B cell (primary cell): ENCODE measurements at regions of chr4 and their contacts with region 1.

Region 1: DNA sequence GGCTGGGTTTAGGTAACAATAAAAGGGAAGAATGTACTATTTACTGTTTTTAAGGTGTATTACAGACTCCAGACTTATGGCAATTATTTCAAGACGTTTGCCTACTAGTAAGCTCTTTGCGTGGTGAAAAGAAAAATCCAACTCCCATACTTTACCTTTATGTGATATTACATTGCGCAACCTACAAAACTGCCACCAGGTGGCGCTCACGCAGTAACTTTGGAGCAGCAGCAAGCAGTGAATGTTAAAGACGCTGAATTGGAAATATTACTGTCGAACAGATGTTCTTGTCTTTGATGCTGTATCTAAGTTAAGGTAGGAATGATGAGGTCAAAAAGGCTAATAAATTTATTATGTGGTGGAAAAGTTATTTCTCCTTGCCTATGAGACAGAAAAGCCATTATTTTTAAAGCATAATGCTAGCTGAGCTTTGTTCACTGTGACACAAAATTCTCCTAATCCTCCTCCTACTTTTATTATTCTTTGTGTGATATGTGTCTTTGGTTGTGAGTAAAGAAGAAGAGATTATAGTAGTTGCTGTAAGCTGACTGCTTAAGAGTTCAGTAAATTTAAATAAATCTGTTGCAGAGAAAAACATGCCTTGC is 1099.8 kb upstream of the TENM3 start:
- DNase-seq: peak; percentile 65
- ATAC-seq: peak; percentile 36
- H3K4me3 ChIP-seq: no peak overlapping the region
- H3K4me3 Mint-ChIP-seq: no peak overlapping the region
- H3K27ac ChIP-seq: no peak overlapping the region
- H3K27ac Mint-ChIP-seq: no peak overlapping the region
- H3K4me1 ChIP-seq: no peaks in the 10 kb centered on the region
- H3K4me1 Mint-ChIP-seq: no peaks in the 10 kb centered on the region
- H3K27me3 ChIP-seq: no peaks in the 10 kb centered on the region
- H3K27me3 Mint-ChIP-seq: no peaks in the 10 kb centered on the region
- CTCF ChIP-seq: peak; percentile 96

Region 2: GRCh38 chr4:181528570-181529184 is 385.3 kb after region 1 on chr4:
- CTCF ChIA-PET with region 1: interaction called, 5 read pairs
- POLR2A ChIA-PET with region 1: no interaction called
- intact Hi-C with region 1: loop called (anchors 2 kb)
- DNase-seq: no peak
- ATAC-seq: no peak
- H3K4me3 ChIP-seq: no peak overlapping the region
- H3K4me3 Mint-ChIP-seq: no peak overlapping the region
- H3K27ac ChIP-seq: no peak overlapping the region
- H3K27ac Mint-ChIP-seq: no peak overlapping the region
- H3K4me1 ChIP-seq: no peaks in the 10 kb centered on the region
- H3K4me1 Mint-ChIP-seq: no peaks in the 10 kb centered on the region
- H3K27me3 ChIP-seq: no peaks in the 10 kb centered on the region
- H3K27me3 Mint-ChIP-seq: no peaks in the 10 kb centered on the region
- CTCF ChIP-seq: peak; percentile 38